Activated CD8-positive, alpha-beta T cell treated with anti-CD3 and anti-CD28 coated beads, Interleukin-2, amount 10 ng/mL, durations not matched to agents 7 days and 5 days (primary cell): ENCODE measurements at regions of chr14 and their contacts with region 1.

Region 1: GRCh38 chr14:93206793-93207467 is at the starts of genes GON7 and UBR7:
- DNase-seq: peak; percentile 94
- ATAC-seq: peak; percentile 89
- H3K4me3 Mint-ChIP-seq: peak within 1 kb of the TSS; percentile 100
- H3K27ac Mint-ChIP-seq: peak within 1 kb of the TSS; percentile 96
- H3K4me1 Mint-ChIP-seq: peaks cover 41% of the 10 kb centered on the region
- H3K27me3 Mint-ChIP-seq: no peaks in the 10 kb centered on the region
- total RNA-seq, gene GON7: 21.5 to 24.6 TPM
- total RNA-seq, gene UBR7: 39.0 to 49.3 TPM

Region 2: GRCh38 chr14:93184388-93185353 is 22.3 kb before region 1 on chr14 and contains the starts of genes LYSET and MOAP1:
- CTCF ChIA-PET with region 1: interaction called, 40 read pairs
- POLR2A ChIA-PET with region 1: interaction called, 87 read pairs
- DNase-seq: peak; percentile 94
- ATAC-seq: peak; percentile 93
- H3K4me3 Mint-ChIP-seq: peak within 1 kb of the TSS; percentile 95
- H3K27ac Mint-ChIP-seq: peak within 1 kb of the TSS; percentile 92
- H3K4me1 Mint-ChIP-seq: peaks cover 34% of the 10 kb centered on the region
- H3K27me3 Mint-ChIP-seq: no peaks in the 10 kb centered on the region
- total RNA-seq, gene LYSET: 9.7 to 10.6 TPM
- total RNA-seq, gene MOAP1: 21.0 to 21.5 TPM

Region 3: GRCh38 chr14:93195316-93195999 is 11.5 kb before region 1 on chr14:
- CTCF ChIA-PET with region 1: interaction called, 6 read pairs
- POLR2A ChIA-PET with region 1: interaction called, 10 read pairs
- DNase-seq: no peak
- ATAC-seq: no peak
- H3K4me3 Mint-ChIP-seq: no peak overlapping the region
- H3K27ac Mint-ChIP-seq: no peak overlapping the region
- H3K4me1 Mint-ChIP-seq: no peaks in the 10 kb centered on the region
- H3K27me3 Mint-ChIP-seq: no peaks in the 10 kb centered on the region

Region 4: GRCh38 chr14:93219103-93219726 is 12.3 kb after region 1 on chr14:
- CTCF ChIA-PET with region 1: interaction called, 14 read pairs
- POLR2A ChIA-PET with region 1: interaction called, 5 read pairs
- DNase-seq: peak; percentile 70
- ATAC-seq: peak; percentile 91
- H3K4me3 Mint-ChIP-seq: no peak overlapping the region
- H3K27ac Mint-ChIP-seq: no peak overlapping the region
- H3K4me1 Mint-ChIP-seq: peaks cover 10% of the 10 kb centered on the region
- H3K27me3 Mint-ChIP-seq: no peaks in the 10 kb centered on the region

Region 5: DNA sequence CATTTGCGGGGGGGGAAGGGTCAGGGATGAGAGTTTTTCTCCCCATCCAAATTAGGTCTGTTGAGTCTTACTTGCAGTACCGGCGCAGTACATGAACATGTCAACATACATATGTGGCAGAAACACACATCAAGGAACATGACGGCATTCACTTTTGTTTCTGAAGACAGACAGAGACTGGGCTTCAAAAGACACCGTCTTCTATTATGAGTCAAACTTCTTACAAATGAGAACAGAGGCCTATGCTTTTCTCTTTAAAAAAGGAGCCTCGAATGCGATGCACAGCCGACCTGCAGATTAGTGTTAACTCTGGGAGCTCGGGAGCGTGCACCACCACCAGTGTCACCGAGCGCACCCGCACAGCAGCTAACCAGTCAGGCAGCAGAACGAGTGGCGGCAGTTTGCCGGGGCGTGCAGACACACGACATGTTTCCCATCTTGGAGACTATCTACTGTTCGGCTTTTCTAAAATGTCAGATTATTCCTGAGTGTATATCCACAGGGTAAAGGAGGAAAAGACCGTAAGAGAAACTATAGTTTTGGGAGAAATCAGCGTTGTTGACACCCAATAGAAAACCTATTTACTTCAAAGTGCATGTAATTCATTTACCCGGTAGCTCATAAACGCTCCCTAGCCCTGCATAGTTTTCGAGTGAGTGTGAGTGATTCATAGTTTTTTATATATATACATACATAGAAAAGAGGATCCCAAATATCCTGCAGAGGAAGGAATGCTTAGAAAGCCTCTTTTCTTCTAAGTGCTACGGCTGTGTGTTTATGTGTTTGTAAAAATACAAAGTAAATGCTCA is 33.1 kb after region 1 on chr14:
- CTCF ChIA-PET with region 1: no interaction called
- POLR2A ChIA-PET with region 1: no interaction called
- DNase-seq: no peak
- ATAC-seq: no peak
- H3K4me3 Mint-ChIP-seq: no peak overlapping the region
- H3K27ac Mint-ChIP-seq: no peak overlapping the region
- H3K4me1 Mint-ChIP-seq: no peaks in the 10 kb centered on the region
- H3K27me3 Mint-ChIP-seq: no peaks in the 10 kb centered on the region

Region 6: GRCh38 chr14:93317875-93318807 is 111.2 kb after region 1 on chr14:
- CTCF ChIA-PET with region 1: no interaction called
- POLR2A ChIA-PET with region 1: no interaction called
- DNase-seq: no peak
- ATAC-seq: no peak
- H3K4me3 Mint-ChIP-seq: no peak overlapping the region
- H3K27ac Mint-ChIP-seq: no peak overlapping the region
- H3K4me1 Mint-ChIP-seq: peaks cover 10% of the 10 kb centered on the region
- H3K27me3 Mint-ChIP-seq: no peaks in the 10 kb centered on the region